Aorta (tissue), 5 donors: ENCODE measurements at regions of chr15 and their contacts with region 1.

Region 1: DNA sequence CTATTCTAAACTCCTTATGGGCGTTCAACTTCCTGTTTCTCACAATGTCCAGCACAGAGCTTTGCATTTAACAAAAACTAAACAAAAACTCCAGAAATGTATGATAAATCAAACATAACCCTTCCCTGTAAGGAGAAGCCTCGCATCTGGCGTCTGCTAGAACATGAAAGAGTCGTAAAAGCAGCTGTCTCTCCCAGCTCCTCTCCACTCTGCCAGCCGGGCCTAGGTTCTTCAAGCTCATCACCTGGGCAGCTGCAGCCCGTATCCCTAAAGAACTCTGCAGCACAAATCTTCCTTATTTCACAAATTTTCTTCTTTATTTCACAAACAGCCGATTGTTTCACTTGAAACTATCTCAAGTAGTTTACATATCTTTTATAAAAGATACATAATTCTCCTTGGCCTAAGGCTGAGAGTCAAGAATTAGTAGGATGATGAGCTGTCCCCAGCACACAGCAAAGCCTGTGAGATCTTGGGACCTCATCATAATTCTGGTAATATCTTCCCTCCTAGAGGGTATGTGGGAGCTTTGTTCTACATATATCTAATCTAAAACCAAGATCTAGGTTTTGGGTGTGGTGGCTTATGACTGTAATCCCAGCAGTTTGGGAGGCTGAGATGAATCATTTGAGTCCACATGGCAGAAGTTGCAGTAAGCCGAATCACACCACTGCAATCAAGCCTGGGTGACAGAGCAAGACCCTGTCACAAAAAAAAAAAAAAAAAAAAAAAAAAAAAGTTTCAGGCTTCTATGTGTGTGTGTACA is 35.3 kb downstream of the ANXA2 start:
- DNase-seq: no peak
- ATAC-seq: peak; percentile 48
- H3K4me3 ChIP-seq: no peak overlapping the region
- H3K27ac ChIP-seq: peak overlapping the region; percentile 29 to 74
- H3K4me1 ChIP-seq: peaks cover 0 to 24% of the 10 kb centered on the region in 2 donors
- H3K27me3 ChIP-seq: no peaks in the 10 kb centered on the region

Region 2: DNA sequence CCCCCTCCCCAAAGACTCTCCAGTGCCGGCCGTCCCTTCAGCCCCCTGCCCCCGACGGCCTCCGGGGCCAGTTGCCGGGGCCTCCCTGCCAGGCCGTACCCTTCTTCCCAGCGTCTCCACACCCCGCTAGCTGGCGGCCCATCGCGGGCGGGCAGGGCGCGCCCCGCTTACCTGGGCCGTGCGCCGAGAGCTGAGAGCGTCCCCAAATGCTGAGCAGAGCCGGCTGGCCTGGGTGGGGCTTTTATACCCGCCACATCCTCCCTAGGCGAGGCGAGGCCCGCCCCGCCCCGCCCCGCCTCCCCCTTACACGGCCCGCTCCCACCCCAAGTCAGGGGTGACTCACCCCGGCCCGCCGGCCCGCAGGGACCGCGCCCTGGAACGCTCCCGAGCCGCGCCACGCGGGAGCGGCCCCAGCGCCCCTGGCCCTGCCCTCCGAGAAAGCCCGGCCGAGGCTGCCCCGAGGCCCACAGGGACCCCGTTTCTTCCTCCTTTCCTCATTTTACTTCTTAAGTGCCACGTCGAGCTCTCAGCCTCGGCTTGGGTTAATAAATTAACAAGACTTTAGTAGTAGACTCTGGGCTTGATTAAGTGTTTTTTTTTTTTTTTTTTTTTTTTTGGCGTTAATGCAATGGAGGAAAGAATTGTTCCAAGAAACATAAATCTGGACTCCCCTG is 35.4 kb after region 1 on chr15 and contains the start of gene ANXA2:
- intact Hi-C with region 1: loop called (anchors 5 kb)
- DNase-seq: peak; percentile 93 to 96
- ATAC-seq: peak; percentile 92
- H3K4me3 ChIP-seq: peak within 1 kb of the TSS; percentile 88 to 90
- H3K27ac ChIP-seq: peak within 1 kb of the TSS; percentile 98 to 100
- H3K4me1 ChIP-seq: peaks cover 0 to 3% of the 10 kb centered on the region in 2 donors
- H3K27me3 ChIP-seq: no peaks in the 10 kb centered on the region
- total RNA-seq, gene ANXA2: 699 to 767 TPM

Region 3: GRCh38 chr15:60423537-60423936 is 61.0 kb after region 1 on chr15:
- intact Hi-C with region 1: loop called (anchors 2 to 5 kb)
- DNase-seq: no peak
- ATAC-seq: no peak
- H3K4me3 ChIP-seq: no peak overlapping the region
- H3K27ac ChIP-seq: no peak overlapping the region
- H3K4me1 ChIP-seq: peaks cover 0 to 1% of the 10 kb centered on the region in 2 donors
- H3K27me3 ChIP-seq: no peaks in the 10 kb centered on the region

Region 4: DNA sequence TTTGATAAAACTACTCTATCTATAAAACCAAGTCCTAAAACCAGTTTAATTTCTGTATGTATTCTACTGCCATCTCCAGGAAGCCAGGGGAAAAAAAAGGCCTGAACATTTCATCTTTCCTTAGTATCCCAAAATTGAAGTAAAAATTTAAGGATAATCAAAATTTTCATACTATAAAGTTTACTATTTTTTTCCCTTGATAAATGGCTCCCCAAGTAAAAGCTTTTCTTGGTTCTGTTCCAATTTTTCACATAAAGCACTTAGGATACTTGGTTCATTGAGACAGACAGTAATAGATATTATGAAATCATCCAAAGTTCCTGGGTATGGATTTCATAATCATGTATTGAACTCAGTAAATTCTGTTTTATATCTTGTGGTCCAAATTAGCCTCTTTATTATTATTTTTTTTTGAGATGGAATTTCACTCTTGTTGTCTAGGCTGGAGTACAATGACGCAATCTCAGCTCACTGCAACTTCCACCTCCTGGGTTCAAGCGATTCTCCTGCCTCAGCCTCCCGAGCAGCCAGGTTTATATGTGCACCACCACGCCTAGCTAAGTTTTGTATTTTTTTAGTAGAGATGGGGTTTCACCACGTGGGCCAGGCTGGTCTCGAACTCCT is 81.9 kb after region 1 on chr15:
- intact Hi-C with region 1: loop called (anchors 5 kb)
- DNase-seq: no peak
- ATAC-seq: no peak
- H3K4me3 ChIP-seq: no peak overlapping the region
- H3K27ac ChIP-seq: no peak overlapping the region
- H3K4me1 ChIP-seq: peaks cover 0 to 1% of the 10 kb centered on the region in 2 donors
- H3K27me3 ChIP-seq: no peaks in the 10 kb centered on the region